Activated CD8-positive, alpha-beta T cell treated with anti-CD3 and anti-CD28 coated beads for 36 hours (primary cell): ENCODE measurements at regions of chr11 and their contacts with region 1.

Region 1: GRCh38 chr11:76207642-76208401 is 1.5 kb upstream of the WNT11 start:
- DNase-seq: peak; percentile 80
- ATAC-seq: peak; percentile 79
- H3K4me3 Mint-ChIP-seq: peak overlapping the region; percentile 69
- H3K27ac Mint-ChIP-seq: no peak overlapping the region
- H3K4me1 Mint-ChIP-seq: peaks cover 11% of the 10 kb centered on the region
- H3K27me3 Mint-ChIP-seq: peaks cover 55% of the 10 kb centered on the region
- CTCF ChIP-seq: peak; percentile 97

Region 2: DNA sequence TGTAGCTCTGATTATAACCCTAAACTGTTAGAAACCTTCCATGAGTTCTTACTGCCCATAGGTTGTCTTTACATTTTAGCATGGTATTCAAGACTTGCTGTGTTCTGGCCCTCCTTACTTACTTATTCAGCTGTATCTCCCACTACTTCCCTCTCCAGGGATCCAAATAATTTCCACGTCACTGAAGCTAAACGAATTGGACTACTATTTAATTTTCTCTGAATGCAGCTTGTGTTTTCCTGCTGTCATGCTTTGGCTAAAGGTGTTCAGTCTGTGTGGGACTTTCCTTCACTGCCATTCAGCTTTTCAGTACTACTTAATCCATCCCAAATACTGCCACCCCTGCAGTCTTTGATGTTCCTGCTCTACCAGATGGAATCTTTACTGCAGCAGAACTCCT is 304.5 kb before region 1 on chr11:
- CTCF ChIA-PET with region 1: interaction called, 15 read pairs
- POLR2A ChIA-PET with region 1: no interaction called
- intact Hi-C with region 1: no loop called
- DNase-seq: no peak
- ATAC-seq: no peak
- H3K4me3 Mint-ChIP-seq: no peak overlapping the region
- H3K27ac Mint-ChIP-seq: no peak overlapping the region
- H3K4me1 Mint-ChIP-seq: peaks cover 11% of the 10 kb centered on the region
- H3K27me3 Mint-ChIP-seq: no peaks in the 10 kb centered on the region
- CTCF ChIP-seq: no peak

Region 3: GRCh38 chr11:75986966-75987365 is 220.9 kb before region 1 on chr11:
- CTCF ChIA-PET with region 1: no interaction called
- POLR2A ChIA-PET with region 1: no interaction called
- intact Hi-C with region 1: no loop called
- DNase-seq: no peak
- ATAC-seq: no peak
- H3K4me3 Mint-ChIP-seq: no peak overlapping the region
- H3K27ac Mint-ChIP-seq: no peak overlapping the region
- H3K4me1 Mint-ChIP-seq: peaks cover 12% of the 10 kb centered on the region
- H3K27me3 Mint-ChIP-seq: no peaks in the 10 kb centered on the region
- CTCF ChIP-seq: no peak

Region 4: DNA sequence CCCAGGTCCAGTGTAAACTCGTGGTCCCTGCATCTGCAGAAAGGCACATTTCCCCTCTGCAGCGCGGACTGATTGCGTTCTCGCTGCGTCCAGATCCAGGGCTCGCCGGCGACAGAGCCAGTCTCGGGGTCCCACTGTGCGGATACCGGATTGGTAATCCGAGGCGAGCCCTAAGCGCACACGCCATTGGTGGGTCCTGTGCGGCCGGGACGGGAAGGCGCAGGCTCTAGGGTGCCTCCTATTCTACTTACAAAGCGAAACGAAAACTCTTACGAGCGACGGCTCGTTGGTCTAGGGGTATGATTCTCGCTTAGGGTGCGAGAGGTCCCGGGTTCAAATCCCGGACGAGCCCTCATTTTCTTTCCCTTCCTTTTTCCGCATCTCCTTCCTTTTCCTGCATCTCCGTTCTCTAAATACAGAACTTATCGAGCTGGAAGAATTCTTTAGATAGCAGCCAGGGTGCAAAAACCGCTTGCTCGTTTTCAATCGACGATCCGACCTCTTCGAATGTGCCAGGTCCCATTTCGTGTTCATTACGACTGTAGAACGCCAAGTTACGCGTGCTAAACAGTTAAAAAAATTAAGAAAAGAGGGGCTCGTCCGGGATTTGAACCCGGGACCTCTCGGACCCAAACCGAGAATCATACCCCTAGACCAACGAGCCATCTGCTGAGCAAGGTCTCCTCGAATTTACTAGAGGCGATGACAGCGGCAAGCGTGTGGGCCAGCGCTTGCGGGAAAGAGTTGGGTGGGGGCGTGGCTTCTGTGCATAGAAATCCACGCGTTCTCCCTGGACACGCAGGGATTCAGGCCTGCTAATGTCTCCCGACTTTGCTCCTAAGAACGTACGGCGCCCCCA is 27.6 kb after region 1 on chr11:
- CTCF ChIA-PET with region 1: interaction called, 128 read pairs
- POLR2A ChIA-PET with region 1: interaction called, 39 read pairs
- intact Hi-C with region 1: no loop called
- DNase-seq: peak; percentile 95
- ATAC-seq: peak; percentile 86
- H3K4me3 Mint-ChIP-seq: peak overlapping the region; percentile 83
- H3K27ac Mint-ChIP-seq: peak overlapping the region; percentile 92
- H3K4me1 Mint-ChIP-seq: peaks cover 43% of the 10 kb centered on the region
- H3K27me3 Mint-ChIP-seq: peaks cover 3% of the 10 kb centered on the region
- CTCF ChIP-seq: no peak

Region 5: DNA sequence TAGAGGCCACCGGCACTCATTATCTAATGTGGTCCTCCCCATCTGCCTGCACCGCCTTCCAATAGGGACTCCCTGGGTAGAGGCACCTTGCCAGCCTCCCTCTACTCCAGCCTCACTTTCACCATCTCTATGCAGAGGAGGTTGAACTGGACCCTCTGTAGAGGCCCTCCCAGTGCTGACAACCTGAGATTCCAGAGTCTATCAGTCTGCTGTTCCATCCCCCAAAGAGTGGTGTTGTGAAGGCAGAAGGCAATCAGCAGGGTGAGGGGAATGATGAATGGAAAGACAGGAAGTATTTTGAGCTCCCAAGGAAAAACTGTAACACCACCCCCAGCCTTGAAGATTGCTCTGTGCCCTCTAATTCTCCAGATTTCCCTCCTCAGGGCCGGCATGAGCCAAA is 95.2 kb after region 1 on chr11:
- CTCF ChIA-PET with region 1: interaction called, 88 read pairs
- POLR2A ChIA-PET with region 1: no interaction called
- intact Hi-C with region 1: no loop called
- DNase-seq: no peak
- ATAC-seq: no peak
- H3K4me3 Mint-ChIP-seq: no peak overlapping the region
- H3K27ac Mint-ChIP-seq: no peak overlapping the region
- H3K4me1 Mint-ChIP-seq: no peaks in the 10 kb centered on the region
- H3K27me3 Mint-ChIP-seq: no peaks in the 10 kb centered on the region
- CTCF ChIP-seq: no peak

Region 6: DNA sequence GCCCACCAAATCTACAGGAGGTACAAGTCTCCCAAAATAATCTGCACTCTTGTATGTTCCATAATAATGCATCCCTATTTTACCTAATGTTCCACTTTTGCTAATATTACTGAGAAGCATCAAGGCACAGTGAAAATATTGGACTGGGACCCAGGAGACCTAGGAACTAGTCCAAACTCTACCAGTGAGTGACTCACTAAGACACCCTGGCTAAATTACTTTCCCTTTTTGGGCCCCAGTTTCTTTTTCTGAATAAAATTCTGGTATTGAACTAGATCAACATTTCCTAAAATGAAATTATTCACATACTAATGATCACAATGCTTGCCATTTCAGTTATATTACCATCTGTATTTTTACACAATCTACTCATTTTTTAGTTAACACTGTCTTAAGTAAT is 153.6 kb after region 1 on chr11:
- CTCF ChIA-PET with region 1: interaction called, 14 read pairs
- POLR2A ChIA-PET with region 1: no interaction called
- intact Hi-C with region 1: no loop called
- DNase-seq: no peak
- ATAC-seq: no peak
- H3K4me3 Mint-ChIP-seq: no peak overlapping the region
- H3K27ac Mint-ChIP-seq: peak overlapping the region; percentile 22
- H3K4me1 Mint-ChIP-seq: peaks cover 24% of the 10 kb centered on the region
- H3K27me3 Mint-ChIP-seq: no peaks in the 10 kb centered on the region
- CTCF ChIP-seq: no peak

Region 7: GRCh38 chr11:76512851-76513653 is 305.2 kb after region 1 on chr11:
- CTCF ChIA-PET with region 1: interaction called, 10 read pairs
- POLR2A ChIA-PET with region 1: no interaction called
- intact Hi-C with region 1: no loop called
- DNase-seq: no peak
- ATAC-seq: no peak
- H3K4me3 Mint-ChIP-seq: no peak overlapping the region
- H3K27ac Mint-ChIP-seq: no peak overlapping the region
- H3K4me1 Mint-ChIP-seq: no peaks in the 10 kb centered on the region
- H3K27me3 Mint-ChIP-seq: no peaks in the 10 kb centered on the region
- CTCF ChIP-seq: peak; percentile 36